PC-9 (cell line): ENCODE measurements at regions of chr19 and their contacts with region 1.

Region 1: DNA sequence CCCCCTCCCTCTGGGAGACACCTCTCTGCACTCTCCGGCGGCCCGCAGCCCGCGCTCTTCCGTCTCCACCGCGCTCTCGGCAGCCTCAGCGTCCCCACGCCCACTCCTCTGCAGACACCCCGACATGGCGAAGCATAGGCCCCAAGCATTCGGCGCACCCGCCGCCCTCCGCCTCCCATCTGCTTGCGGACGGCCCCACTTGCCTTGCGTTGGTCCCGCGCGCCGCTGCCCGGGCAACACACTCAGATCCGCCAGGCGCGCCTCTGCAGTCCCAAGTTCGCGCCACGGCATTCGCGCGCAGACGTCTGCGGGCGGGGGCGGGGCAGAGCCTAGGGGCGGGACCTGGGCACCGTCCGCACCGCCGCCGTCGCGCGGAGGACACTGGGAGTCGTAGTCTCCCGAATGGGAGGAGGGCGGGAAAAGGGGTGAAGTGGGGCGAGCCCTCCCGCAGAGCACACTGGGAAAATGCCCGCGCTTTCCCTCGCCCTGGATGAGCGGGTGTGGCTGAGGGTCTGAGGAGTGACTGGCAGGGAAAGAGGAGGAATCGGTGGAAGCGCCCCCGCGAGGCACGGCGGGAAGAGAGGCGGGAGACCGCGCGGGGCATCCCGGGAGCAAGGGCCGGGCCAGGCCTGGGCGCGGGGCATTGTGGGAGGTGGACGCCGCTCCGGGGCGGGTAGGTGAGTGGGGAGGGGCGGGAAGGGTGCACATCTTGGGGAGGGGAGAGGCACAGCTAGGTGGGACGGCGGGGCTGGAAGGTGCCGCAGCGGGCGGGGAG is at the starts of genes LIG1 and ZSWIM9:
- DNase-seq: peak; percentile 93 to 94
- H3K4me3 ChIP-seq: peak within 1 kb of the TSS; percentile 96
- H3K27ac ChIP-seq: peak within 1 kb of the TSS; percentile 57
- H3K4me1 ChIP-seq: peaks cover 17% of the 10 kb centered on the region
- H3K27me3 ChIP-seq: no peaks in the 10 kb centered on the region
- CTCF ChIP-seq: peak; percentile 52; the same call in 1 of the 2 replicates
- total RNA-seq, gene LIG1: 109 and 116 TPM in 2 replicates
- total RNA-seq, gene ZSWIM9: 8.3 and 12.0 TPM in 2 replicates

Region 2: DNA sequence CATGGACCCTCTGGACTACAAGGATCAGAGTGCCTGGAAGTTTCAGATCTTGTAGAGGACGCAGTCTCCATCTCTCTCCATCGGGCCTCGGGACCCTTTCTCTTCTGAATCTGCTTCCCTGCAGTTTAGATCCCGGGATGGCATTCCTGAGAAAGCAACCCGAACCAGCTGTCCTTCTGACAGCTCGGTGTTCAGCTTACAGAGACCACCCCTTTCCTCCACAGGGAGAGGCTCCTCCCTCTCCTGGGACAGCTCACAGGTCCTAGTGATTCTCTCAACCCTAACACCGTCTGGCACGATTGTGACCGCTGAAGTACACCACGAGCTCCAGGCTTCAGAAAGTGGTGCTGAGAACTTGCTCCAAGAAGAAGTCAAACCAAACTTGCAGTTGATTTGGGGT is 330.3 kb before region 1 on chr19:
- CTCF ChIA-PET with region 1: no interaction called
- POLR2A ChIA-PET with region 1: no interaction called
- intact Hi-C with region 1: no loop called
- DNase-seq: no peak
- H3K4me3 ChIP-seq: no peak overlapping the region
- H3K27ac ChIP-seq: no peak overlapping the region
- H3K4me1 ChIP-seq: no peaks in the 10 kb centered on the region
- H3K27me3 ChIP-seq: peaks cover 49% of the 10 kb centered on the region
- CTCF ChIP-seq: no peak

Region 3: GRCh38 chr19:48152551-48152950 is 17.7 kb before region 1 on chr19:
- CTCF ChIA-PET with region 1: interaction called, 11 read pairs
- POLR2A ChIA-PET with region 1: interaction called, 5 read pairs
- intact Hi-C with region 1: no loop called
- DNase-seq: peak; percentile 46 to 54
- H3K4me3 ChIP-seq: no peak overlapping the region
- H3K27ac ChIP-seq: peak overlapping the region; percentile 32; the same call in 1 of the 2 replicates
- H3K4me1 ChIP-seq: no peaks in the 10 kb centered on the region
- H3K27me3 ChIP-seq: no peaks in the 10 kb centered on the region
- CTCF ChIP-seq: peak; percentile 97

Region 4: GRCh38 chr19:48203732-48204628 is 33.8 kb after region 1 on chr19:
- CTCF ChIA-PET with region 1: no interaction called
- POLR2A ChIA-PET with region 1: interaction called, 32 read pairs
- intact Hi-C with region 1: no loop called
- DNase-seq: peak; percentile 94 to 95
- H3K4me3 ChIP-seq: peak overlapping the region; percentile 67
- H3K27ac ChIP-seq: no peak overlapping the region; the same call in 1 of the 2 replicates
- H3K4me1 ChIP-seq: peaks cover 14% of the 10 kb centered on the region
- H3K27me3 ChIP-seq: no peaks in the 10 kb centered on the region
- CTCF ChIP-seq: no peak

Region 5: GRCh38 chr19:48255376-48256303 is 85.4 kb after region 1 on chr19 and contains the start of gene CARD8:
- CTCF ChIA-PET with region 1: no interaction called
- POLR2A ChIA-PET with region 1: no interaction called
- intact Hi-C with region 1: loop called (anchors 1 kb)
- DNase-seq: peak; percentile 72 to 82
- H3K4me3 ChIP-seq: peak within 1 kb of the TSS; percentile 65
- H3K27ac ChIP-seq: peak within 1 kb of the TSS; percentile 93
- H3K4me1 ChIP-seq: peaks cover 32% of the 10 kb centered on the region
- H3K27me3 ChIP-seq: no peaks in the 10 kb centered on the region
- CTCF ChIP-seq: no peak
- total RNA-seq, gene CARD8: 17.7 and 25.6 TPM in 2 replicates

Region 6: DNA sequence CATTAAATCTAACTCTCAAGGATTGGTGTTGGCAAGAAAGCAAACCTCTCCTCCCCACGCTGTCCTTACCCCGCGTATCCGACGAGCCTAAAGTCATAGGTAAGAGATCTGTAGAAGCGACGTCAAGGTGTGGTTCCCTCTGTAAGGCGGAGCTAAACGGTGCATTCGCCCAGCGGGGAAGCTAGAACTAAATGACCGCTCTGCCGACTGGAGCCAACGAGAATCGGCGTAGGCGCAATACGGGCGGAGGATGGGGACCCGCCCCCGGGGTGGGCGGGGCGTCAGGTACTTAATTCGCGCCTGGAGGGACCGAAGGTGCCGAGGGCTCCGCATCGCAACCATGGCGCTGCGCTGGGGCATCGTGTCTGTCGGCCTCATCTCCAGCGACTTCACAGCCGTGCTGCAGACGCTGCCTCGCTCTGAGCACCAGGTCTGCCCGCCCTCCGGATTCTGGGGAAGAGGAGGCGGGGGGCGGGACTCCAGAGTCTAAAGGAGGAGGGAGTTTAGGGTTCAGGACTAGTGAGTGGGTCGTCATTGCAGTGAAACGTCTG is 763.2 kb after region 1 on chr19 and contains the start of gene DHDH:
- CTCF ChIA-PET with region 1: no interaction called
- POLR2A ChIA-PET with region 1: interaction called, 14 read pairs
- intact Hi-C with region 1: no loop called
- DNase-seq: peak; percentile 93 to 94
- H3K4me3 ChIP-seq: peak within 1 kb of the TSS; percentile 56
- H3K27ac ChIP-seq: no peak within 1 kb of the TSS
- H3K4me1 ChIP-seq: peaks cover 12% of the 10 kb centered on the region
- H3K27me3 ChIP-seq: no peaks in the 10 kb centered on the region
- CTCF ChIP-seq: no peak
- total RNA-seq, gene DHDH: 2.0 and 2.4 TPM in 2 replicates